ENCODE measurements at regions of chr19 and their contacts with region 1.

Region 1: GRCh38 chr19:18521885-18522624 is at the start of gene ELL:
- DNase-seq: peak; percentile 99
- CTCF ChIP-seq: no peak

Region 2: GRCh38 chr19:18484992-18485391 is 37.1 kb before region 1 on chr19:
- CTCF ChIA-PET with region 1: interaction called, 11 read pairs
- POLR2A ChIA-PET with region 1: no interaction called
- DNase-seq: no peak
- CTCF ChIP-seq: no peak

Region 3: DNA sequence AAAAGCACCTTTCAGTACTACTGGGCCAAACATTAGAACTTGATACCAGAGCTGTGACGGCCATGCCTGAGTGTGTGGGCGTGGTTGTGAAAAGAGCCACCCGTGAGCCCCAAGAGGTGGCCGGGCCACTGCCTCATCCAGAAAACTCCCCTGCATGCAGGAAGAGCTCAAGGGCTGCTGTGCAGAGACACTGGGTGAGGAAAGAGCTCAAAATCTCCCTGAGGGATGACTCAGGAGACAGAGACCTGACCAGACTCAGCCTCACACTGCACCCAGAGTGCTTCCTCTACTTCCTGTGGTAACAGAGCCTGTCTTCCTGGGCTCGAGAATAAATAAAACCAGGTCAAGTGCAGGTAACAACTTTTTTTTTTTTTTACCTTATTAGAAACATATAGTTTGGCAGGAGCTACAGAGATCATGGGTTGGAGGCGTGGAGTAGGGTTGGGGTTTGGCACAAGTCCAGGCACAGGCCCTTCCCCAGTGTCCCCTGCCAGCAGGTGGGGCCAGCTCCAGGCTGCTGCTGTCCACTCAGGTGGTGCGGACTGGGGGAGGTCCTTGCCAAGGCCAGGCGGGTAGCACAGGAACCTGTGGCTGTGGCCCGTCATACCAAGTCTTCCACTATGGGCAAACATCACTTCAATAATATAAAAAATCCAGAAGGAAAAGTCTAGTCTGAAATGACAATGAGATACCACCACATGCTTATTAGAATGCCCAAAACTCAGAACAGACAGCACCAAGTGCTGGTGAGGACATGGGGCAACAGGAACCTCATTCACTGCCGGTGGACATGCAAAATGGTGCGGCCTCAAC is 25.7 kb before region 1 on chr19:
- CTCF ChIA-PET with region 1: interaction called, 38 read pairs
- POLR2A ChIA-PET with region 1: interaction called, 4 read pairs
- DNase-seq: peak; percentile 65
- CTCF ChIP-seq: no peak

Region 4: DNA sequence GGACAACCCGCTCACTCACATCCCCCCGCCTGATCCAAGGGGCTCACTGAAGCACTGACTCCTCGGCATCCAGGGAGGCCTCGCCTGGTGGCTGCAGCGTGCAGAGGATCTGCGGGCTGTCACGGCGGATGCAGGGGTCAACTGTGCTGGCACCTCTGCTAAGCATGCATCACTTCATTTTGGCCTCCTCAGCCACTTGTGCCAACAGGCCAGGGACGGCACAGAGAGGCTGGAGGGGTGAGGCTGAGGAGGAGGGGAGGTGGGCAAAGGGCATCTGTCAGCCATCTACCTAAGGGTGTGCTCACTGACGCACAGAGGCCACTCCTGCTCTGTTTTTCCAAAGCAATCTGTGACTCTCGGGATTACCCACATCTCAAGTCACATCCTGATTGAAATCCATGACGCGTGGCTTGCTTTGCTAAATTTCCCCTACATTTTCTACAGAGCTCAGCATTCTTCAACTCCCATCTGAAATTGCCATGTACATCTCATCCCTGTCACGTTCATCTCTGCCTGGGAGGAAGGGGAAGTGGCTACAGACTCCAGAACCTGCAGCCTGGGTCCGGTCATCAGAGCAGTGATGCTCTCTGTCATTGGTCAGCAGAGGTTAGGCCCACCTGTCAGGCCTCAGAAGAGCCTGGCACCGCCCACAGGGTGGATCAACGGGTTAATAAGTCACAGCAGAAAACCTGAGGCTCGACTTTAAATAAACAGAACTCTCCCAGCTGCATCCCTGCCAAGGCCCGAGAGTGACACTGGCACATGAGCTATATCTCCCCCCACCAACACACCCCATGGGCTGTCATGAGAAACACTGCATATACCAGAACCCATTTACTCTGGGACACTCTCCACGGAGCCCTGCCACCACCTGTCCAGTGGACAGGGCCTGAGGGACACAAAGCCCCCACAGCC is 17.8 kb before region 1 on chr19:
- CTCF ChIA-PET with region 1: interaction called, 38 read pairs
- POLR2A ChIA-PET with region 1: interaction called, 3 read pairs
- DNase-seq: peak; percentile 74
- CTCF ChIP-seq: no peak

Region 5: GRCh38 chr19:18510216-18510615 is 11.8 kb before region 1 on chr19:
- CTCF ChIA-PET with region 1: interaction called, 38 read pairs
- POLR2A ChIA-PET with region 1: interaction called, 5 read pairs
- DNase-seq: no peak
- CTCF ChIP-seq: no peak

Region 6: GRCh38 chr19:18588611-18589379 is 66.7 kb after region 1 on chr19 and contains the start of gene REX1BD:
- CTCF ChIA-PET with region 1: interaction called, 17 read pairs
- POLR2A ChIA-PET with region 1: no interaction called
- DNase-seq: peak; percentile 86
- CTCF ChIP-seq: peak; percentile 96

Region 7: DNA sequence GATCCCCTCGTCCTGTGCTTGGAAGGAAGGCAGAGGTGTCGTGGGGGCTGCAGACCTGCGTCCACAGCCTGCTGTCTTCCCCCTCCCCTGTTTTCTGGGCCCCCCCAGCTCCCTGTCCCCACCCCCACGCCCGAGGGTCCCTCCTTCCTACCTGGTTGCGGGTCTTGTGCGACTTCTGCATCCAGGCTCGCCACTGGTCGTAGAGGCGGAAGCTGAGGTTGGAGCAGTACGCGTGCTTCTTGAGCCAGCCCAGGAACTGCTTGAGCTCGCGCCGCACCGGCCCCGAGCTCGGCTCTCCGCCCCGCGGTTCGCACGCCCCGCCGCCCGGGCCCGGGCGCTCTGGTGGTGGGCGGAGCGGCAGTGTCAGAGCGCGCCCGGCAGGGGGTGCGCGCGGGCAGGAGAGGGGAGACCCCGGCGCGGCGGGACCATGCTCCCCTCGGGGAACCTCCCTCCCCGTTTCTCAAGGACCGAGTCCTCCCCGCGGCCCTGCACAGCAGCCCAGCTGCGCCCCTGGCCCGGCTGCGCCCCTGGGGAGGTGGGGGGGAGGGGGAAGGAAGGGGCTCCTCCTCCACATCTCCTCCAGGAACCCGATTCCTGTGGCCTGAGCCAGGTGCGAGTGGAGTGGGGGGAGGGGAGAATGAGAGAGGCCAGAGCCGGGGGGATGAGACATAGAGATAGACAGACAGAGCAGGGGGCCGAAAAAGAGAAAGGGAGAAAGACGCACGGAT is 72.2 kb after region 1 on chr19:
- CTCF ChIA-PET with region 1: interaction called, 17 read pairs
- POLR2A ChIA-PET with region 1: no interaction called
- DNase-seq: peak; percentile 92
- CTCF ChIP-seq: peak; percentile 83

Region 8: DNA sequence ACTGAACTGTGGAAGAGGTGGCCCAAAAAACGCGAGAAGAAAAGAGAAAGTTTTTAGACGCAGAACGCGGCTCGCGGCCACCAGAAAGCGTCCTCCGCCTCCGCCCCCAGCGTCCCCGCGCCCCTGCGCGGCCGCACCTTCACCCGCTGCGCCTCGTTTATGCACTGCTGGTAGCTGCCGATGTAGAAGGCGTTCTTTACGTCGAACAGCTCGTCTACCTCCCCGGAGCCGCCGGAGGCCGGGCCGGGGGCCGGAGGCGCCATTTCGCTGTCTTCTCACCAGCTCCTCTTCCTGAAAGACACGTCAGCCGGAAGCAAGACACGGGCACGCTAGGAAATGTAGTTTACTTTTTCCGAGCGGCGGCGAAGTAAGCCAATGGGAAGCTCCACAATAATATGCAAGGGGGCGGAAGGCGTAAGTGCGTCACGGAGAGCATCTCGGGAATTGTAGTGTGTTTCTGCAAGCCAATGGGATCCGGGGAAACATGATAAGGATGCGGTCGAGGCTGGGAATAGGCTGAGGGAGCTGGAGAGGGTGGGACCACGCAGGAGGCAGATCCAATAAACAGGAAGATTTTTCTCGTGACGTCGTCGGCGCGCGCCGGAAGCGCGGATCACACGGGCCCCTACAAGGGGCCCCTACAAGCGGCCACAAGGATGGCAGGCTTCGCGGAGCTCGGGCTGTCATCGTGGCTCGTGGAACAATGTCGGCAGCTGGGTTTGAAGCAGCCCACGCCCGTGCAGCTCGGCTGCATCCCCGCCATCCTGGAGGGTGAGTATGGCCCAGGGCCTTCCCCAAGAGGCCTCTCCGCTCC is 397.2 kb after region 1 on chr19 and contains the starts of genes COPE and DDX49:
- CTCF ChIA-PET with region 1: no interaction called
- POLR2A ChIA-PET with region 1: no interaction called
- DNase-seq: peak; percentile 99
- CTCF ChIP-seq: no peak